ENCODE measurements at regions of chr15 and their contacts with region 1.

Region 1: GRCh38 chr15:28169366-28169765 is 70.3 kb upstream of the OCA2 start:
- DNase-seq: no peak
- H3K4me3 ChIP-seq: no peak overlapping the region
- H3K27ac ChIP-seq: no peak overlapping the region
- H3K4me1 ChIP-seq: no peaks in the 10 kb centered on the region
- H3K27me3 ChIP-seq: no peaks in the 10 kb centered on the region
- CTCF ChIP-seq: no peak
- EP300 ChIP-seq: no peak
- POLR2A ChIP-seq: no peak

Region 2: DNA sequence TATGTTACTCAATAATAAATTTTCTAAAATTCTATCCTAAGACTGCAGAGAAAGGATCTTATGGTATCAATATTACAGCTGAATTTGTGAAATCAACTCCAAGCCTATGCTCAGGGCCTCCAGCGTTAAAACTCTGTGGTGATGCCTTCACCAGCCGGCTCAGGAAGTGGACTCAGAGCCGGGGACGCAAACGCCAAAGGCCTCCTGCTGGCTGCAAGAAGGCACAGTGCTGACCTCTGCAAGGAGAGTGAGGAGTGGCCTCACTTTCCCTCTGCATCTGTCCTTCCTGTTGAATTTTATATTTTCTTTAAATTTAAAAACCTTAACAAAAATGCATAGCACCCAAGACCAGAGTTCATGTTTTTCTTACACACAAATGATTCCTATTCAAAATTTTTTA is 104.1 kb after region 1 on chr15:
- in situ Hi-C with region 1: loop called in 1 of 4 experiments (anchors 25 kb)
- intact Hi-C with region 1: no loop called
- DNase-seq: no peak
- H3K4me3 ChIP-seq: no peak overlapping the region
- H3K27ac ChIP-seq: no peak overlapping the region
- H3K4me1 ChIP-seq: no peaks in the 10 kb centered on the region
- H3K27me3 ChIP-seq: no peaks in the 10 kb centered on the region
- CTCF ChIP-seq: no peak
- EP300 ChIP-seq: no peak
- POLR2A ChIP-seq: no peak